ENCODE measurements at regions of chr6 and their contacts with region 1.

Region 1: GRCh38 chr6:132669690-132670291 is 10.8 kb upstream of the TAAR1 start:
- DNase-seq: peak in 2 of 9 experiments; percentile 30 to 48
- ATAC-seq: peak; percentile 46
- H3K4me3 ChIP-seq: no peak overlapping the region
- H3K4me3 Mint-ChIP-seq: no peak overlapping the region
- H3K27ac ChIP-seq: no peak overlapping the region
- H3K27ac Mint-ChIP-seq: no peak overlapping the region
- H3K4me1 ChIP-seq: peaks cover 3% of the 10 kb centered on the region
- H3K4me1 Mint-ChIP-seq: peaks cover 2% of the 10 kb centered on the region
- H3K27me3 ChIP-seq: no peaks in the 10 kb centered on the region
- H3K27me3 Mint-ChIP-seq: peaks cover 7% of the 10 kb centered on the region
- CTCF ChIP-seq: peak; percentile 67

Region 2: DNA sequence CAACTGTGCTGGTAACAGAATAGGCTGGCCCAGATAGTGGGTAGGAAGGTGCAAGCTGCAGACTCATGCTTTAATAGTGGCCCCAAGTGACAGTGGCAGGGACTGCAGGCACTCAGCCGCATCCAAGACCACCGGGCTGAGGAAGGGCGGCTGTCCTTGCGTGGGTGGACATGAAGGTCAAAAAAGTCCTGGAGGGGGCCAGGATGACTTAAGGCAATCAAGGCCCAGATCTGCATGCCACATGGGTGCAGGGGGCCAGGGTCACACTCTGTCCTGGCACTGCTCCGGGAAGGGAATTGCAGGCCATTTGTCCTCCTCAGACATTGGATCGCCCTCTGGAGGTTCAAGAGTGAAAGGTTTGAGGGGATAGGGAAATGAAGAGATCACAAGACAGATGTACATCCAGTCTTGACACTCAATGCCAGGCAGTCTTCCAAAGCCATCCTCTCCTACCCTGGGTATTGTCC is 98.3 kb after region 1 on chr6:
- CTCF ChIA-PET with region 1: interaction called, 10 read pairs
- POLR2A ChIA-PET with region 1: no interaction called
- intact Hi-C with region 1: loop called (anchors 1 to 2 kb)
- DNase-seq: peak in 5 of 9 experiments; percentile 1 to 55 (median 31)
- ATAC-seq: peak; percentile 39
- H3K4me3 ChIP-seq: no peak overlapping the region
- H3K4me3 Mint-ChIP-seq: no peak overlapping the region
- H3K27ac ChIP-seq: no peak overlapping the region
- H3K27ac Mint-ChIP-seq: no peak overlapping the region
- H3K4me1 ChIP-seq: peaks cover 12% of the 10 kb centered on the region
- H3K4me1 Mint-ChIP-seq: peaks cover 19% of the 10 kb centered on the region
- H3K27me3 ChIP-seq: no peaks in the 10 kb centered on the region
- H3K27me3 Mint-ChIP-seq: no peaks in the 10 kb centered on the region
- CTCF ChIP-seq: peak; percentile 28

Region 3: GRCh38 chr6:132780770-132781371 is 111.1 kb after region 1 on chr6:
- CTCF ChIA-PET with region 1: no interaction called
- POLR2A ChIA-PET with region 1: interaction called, 6 read pairs
- intact Hi-C with region 1: loop called in 1 of 2 experiments (anchors 5 kb)
- DNase-seq: peak in 2 of 9 experiments; percentile 22 to 34
- ATAC-seq: peak; percentile 63
- H3K4me3 ChIP-seq: no peak overlapping the region
- H3K4me3 Mint-ChIP-seq: no peak overlapping the region
- H3K27ac ChIP-seq: no peak overlapping the region
- H3K27ac Mint-ChIP-seq: no peak overlapping the region
- H3K4me1 ChIP-seq: no peaks in the 10 kb centered on the region
- H3K4me1 Mint-ChIP-seq: no peaks in the 10 kb centered on the region
- H3K27me3 ChIP-seq: no peaks in the 10 kb centered on the region
- H3K27me3 Mint-ChIP-seq: no peaks in the 10 kb centered on the region
- CTCF ChIP-seq: peak; percentile 23

Region 4: GRCh38 chr6:132798869-132799538 is 129.2 kb after region 1 on chr6:
- CTCF ChIA-PET with region 1: interaction called, 27 read pairs
- POLR2A ChIA-PET with region 1: no interaction called
- intact Hi-C with region 1: loop called in 1 of 2 experiments (anchors 1 kb)
- DNase-seq: peak; percentile 41 to 85 (median 70)
- ATAC-seq: peak; percentile 80
- H3K4me3 ChIP-seq: peak overlapping the region in 1 of 2 experiments; percentile 91
- H3K4me3 Mint-ChIP-seq: no peak overlapping the region
- H3K27ac ChIP-seq: peak overlapping the region in 1 of 2 experiments; percentile 55
- H3K27ac Mint-ChIP-seq: no peak overlapping the region
- H3K4me1 ChIP-seq: peaks cover 5% of the 10 kb centered on the region
- H3K4me1 Mint-ChIP-seq: peaks cover 29% of the 10 kb centered on the region
- H3K27me3 ChIP-seq: no peaks in the 10 kb centered on the region
- H3K27me3 Mint-ChIP-seq: no peaks in the 10 kb centered on the region
- CTCF ChIP-seq: peak; percentile 72

Region 5: DNA sequence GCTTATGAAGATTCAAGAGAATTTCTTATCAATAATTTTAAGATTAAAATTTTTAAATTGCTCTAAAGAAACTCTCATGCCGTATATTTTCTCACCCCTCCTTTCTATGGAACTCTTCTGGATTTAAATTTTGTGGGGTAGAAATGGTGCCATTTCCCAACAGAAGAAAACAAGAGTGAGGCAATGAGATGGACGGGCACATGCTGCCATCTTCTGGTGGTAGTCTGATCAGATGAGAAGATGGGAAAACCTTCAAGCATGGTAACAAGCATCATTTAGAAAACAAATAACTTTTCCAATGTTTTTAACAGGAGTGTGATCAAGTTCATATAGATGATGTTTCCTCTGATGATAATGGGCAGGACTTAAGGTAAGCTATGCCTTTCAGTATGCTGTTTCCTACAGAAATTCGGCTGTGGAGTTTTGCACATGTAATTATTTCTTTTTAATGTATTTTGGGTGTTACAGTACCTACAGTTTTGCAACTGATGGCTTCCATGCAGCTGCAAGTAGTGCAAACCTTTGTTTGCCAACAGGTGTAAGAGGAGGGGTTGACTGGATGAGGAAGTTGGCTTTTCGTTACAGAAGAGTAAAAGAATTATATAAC is 842.7 kb after region 1 on chr6:
- CTCF ChIA-PET with region 1: no interaction called
- POLR2A ChIA-PET with region 1: no interaction called
- intact Hi-C with region 1: loop called in 1 of 2 experiments (anchors 5 kb)
- DNase-seq: peak in 2 of 9 experiments; percentile 20 to 23
- ATAC-seq: no peak
- H3K4me3 ChIP-seq: no peak overlapping the region
- H3K4me3 Mint-ChIP-seq: no peak overlapping the region
- H3K27ac ChIP-seq: no peak overlapping the region
- H3K27ac Mint-ChIP-seq: no peak overlapping the region
- H3K4me1 ChIP-seq: no peaks in the 10 kb centered on the region
- H3K4me1 Mint-ChIP-seq: no peaks in the 10 kb centered on the region
- H3K27me3 ChIP-seq: no peaks in the 10 kb centered on the region
- H3K27me3 Mint-ChIP-seq: peaks cover 18% of the 10 kb centered on the region
- CTCF ChIP-seq: no peak

Region 6: GRCh38 chr6:133553652-133554051 is 883.9 kb after region 1 on chr6:
- CTCF ChIA-PET with region 1: interaction called, 3 read pairs
- POLR2A ChIA-PET with region 1: no interaction called
- intact Hi-C with region 1: loop called in 1 of 2 experiments (anchors 5 kb)
- DNase-seq: peak in 2 of 9 experiments; percentile 39 to 50
- ATAC-seq: no peak
- H3K4me3 ChIP-seq: no peak overlapping the region
- H3K4me3 Mint-ChIP-seq: no peak overlapping the region
- H3K27ac ChIP-seq: no peak overlapping the region
- H3K27ac Mint-ChIP-seq: no peak overlapping the region
- H3K4me1 ChIP-seq: no peaks in the 10 kb centered on the region
- H3K4me1 Mint-ChIP-seq: no peaks in the 10 kb centered on the region
- H3K27me3 ChIP-seq: no peaks in the 10 kb centered on the region
- H3K27me3 Mint-ChIP-seq: peaks cover 3% of the 10 kb centered on the region
- CTCF ChIP-seq: peak; percentile 36

Region 7: DNA sequence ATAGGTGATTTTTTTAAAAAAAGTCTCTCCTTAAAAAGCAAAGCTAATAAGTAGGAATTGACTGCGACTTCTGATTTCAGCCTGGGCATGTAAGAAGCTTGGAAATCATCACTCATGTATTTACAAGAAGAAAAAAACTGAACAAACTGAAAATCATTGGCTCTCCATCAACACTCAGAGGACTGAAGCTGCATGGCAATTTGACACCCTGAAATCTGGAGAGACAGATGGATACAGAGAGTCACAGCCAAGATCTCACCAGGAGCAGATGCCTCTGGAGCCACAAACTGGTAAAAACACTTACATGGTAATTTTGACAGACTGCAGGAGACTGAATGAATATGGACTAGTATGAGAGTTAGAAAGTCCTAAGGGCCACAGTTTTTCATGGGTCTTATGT is 1027.9 kb after region 1 on chr6:
- CTCF ChIA-PET with region 1: no interaction called
- POLR2A ChIA-PET with region 1: no interaction called
- intact Hi-C with region 1: no loop called
- DNase-seq: no peak
- ATAC-seq: no peak
- H3K4me3 ChIP-seq: no peak overlapping the region
- H3K4me3 Mint-ChIP-seq: no peak overlapping the region
- H3K27ac ChIP-seq: no peak overlapping the region
- H3K27ac Mint-ChIP-seq: no peak overlapping the region
- H3K4me1 ChIP-seq: no peaks in the 10 kb centered on the region
- H3K4me1 Mint-ChIP-seq: no peaks in the 10 kb centered on the region
- H3K27me3 ChIP-seq: no peaks in the 10 kb centered on the region
- H3K27me3 Mint-ChIP-seq: peaks cover 2% of the 10 kb centered on the region
- CTCF ChIP-seq: no peak

Region 8: DNA sequence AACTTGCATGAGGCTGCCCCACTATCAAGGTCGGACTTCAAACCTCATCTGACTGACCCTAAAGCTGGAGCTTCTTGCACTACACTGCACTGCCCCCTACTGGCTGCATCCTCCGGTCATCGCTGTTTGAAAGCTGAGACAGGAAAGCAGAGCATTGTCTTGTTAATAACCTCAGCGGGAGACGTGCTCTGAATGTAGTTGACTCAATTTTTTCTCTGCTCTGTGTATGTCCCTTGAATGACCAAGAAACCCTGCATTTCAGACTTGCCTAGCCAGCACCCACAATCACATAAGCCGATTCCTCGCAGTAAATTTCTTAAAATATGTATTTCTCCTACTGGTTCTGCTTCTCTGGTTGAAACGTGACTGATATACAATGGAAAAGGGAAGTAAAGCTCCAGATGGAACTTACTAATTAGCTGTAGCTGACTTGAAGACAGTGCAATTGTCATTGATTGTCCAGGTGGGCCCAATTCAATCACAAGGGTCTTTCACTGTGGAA is 1246.9 kb after region 1 on chr6:
- CTCF ChIA-PET with region 1: interaction called, 6 read pairs
- POLR2A ChIA-PET with region 1: no interaction called
- intact Hi-C with region 1: loop called (anchors 5 kb)
- DNase-seq: peak; percentile 21 to 79 (median 70)
- ATAC-seq: peak; percentile 52
- H3K4me3 ChIP-seq: no peak overlapping the region
- H3K4me3 Mint-ChIP-seq: no peak overlapping the region
- H3K27ac ChIP-seq: no peak overlapping the region
- H3K27ac Mint-ChIP-seq: no peak overlapping the region
- H3K4me1 ChIP-seq: peaks cover 5% of the 10 kb centered on the region
- H3K4me1 Mint-ChIP-seq: peaks cover 3% of the 10 kb centered on the region
- H3K27me3 ChIP-seq: no peaks in the 10 kb centered on the region
- H3K27me3 Mint-ChIP-seq: peaks cover 13% of the 10 kb centered on the region
- CTCF ChIP-seq: peak; percentile 71